Heart right ventricle (tissue), 16 donors: ENCODE measurements at regions of chr9 and their contacts with region 1.

Region 1: DNA sequence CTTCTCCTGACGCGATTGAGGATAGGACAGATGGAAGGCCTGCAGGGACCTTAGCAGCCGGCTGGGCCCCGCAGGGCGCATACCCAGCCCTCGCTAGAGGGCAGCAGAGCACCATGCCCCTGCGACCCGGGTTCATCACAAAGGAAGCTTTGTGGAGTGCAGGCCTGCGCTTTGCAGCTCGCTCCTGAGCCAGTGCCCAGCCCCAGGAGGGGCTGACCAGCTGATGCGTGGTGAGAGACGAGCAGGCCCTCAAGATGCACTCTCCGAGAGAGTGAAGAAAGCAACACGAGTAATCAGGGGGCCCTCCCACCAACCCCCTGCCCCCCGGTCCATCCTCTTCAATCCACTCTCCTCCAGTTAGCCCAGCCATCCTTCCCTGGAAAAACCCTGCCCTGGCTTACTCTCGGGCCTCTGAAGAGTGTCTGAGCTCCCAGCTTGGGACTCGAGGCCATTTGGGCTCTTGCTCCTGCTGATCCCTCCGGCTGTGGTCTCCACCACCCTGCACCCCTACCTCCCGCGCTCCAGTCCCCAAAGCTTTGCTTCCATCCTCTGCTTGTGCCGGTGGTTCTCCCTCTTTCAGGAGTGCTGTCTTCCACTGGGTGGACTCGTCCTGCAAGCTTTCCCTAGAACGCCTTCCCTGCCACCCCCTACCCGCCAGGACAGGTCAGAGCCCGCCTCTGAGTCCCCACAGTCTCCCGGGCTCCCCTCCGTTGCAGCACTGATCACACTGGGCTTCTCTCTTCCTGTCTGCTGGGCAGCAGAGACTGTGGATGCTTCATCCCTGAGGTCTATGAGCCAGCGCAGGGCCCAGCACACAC is 9.1 kb upstream of the KIF12 start:
- DNase-seq: peak; percentile 70 to 84
- ATAC-seq: peak; percentile 94 to 97 (median 96)
- H3K4me3 ChIP-seq: no peak overlapping the region
- H3K27ac ChIP-seq: no peak overlapping the region
- H3K4me1 ChIP-seq: peaks cover 3 to 20% (median 9%) of the 10 kb centered on the region in 9 donors
- H3K27me3 ChIP-seq: peaks cover 0 to 10% (median 0%) of the 10 kb centered on the region in 7 donors
- CTCF ChIP-seq: peak; percentile 79 to 96 (median 93)

Region 2: DNA sequence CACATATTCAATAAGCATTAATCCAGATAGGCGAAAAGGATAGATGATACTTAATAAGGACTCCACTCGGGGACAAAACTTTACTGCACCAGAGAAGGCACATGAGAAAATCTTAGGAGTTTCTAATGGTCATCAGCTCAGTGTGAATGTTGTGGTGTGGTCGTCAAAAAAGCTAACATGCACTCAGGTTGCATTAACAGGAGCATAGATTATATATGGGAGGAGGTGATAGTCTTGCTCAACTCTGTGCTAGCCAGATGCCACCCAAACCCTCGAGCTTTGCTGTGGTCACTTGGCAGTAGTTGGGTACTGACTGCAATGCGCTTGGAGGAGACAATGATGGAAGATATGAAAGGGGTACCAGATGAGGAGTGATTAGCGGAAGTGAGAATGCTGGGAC is 38.5 kb after region 1 on chr9:
- intact Hi-C with region 1: loop called in 6 of 10 experiments (anchors 2 to 5 kb)
- DNase-seq: no peak
- ATAC-seq: no peak
- H3K4me3 ChIP-seq: no peak overlapping the region
- H3K27ac ChIP-seq: no peak overlapping the region
- H3K4me1 ChIP-seq: peaks cover 2 to 13% (median 8%) of the 10 kb centered on the region in 9 donors
- H3K27me3 ChIP-seq: peaks cover 0 to 18% (median under 1%) of the 10 kb centered on the region in 7 donors
- CTCF ChIP-seq: no peak

Region 3: DNA sequence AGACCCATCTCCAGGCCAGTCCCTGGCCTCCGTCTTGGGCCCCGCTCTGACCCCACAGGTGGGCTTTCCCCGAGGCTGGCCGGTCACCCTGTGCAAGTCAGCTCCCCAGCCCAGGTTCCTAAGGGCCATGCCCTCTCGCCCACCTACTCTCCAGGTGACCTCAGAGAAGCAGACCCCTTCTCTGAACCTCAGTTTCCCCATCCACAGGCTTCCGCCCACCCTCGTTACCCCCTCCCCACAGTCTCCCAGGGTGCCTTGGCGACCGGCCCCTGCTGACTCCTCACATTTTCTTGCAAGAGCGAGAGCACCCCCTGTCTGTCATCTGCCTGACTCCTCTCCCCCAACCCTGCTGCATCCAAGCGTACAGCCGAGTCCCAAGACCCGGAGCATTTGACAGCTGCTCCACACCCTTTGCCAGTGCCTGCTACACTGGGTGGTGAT is 163.4 kb after region 1 on chr9:
- intact Hi-C with region 1: loop called in 7 of 10 experiments (anchors 1 to 10 kb)
- DNase-seq: peak; percentile 41 to 55
- ATAC-seq: peak; percentile 46 to 82 (median 72)
- H3K4me3 ChIP-seq: no peak overlapping the region
- H3K27ac ChIP-seq: no peak overlapping the region
- H3K4me1 ChIP-seq: no peaks in the 10 kb centered on the region
- H3K27me3 ChIP-seq: no peaks in the 10 kb centered on the region
- CTCF ChIP-seq: peak in 8 of 9 donors; percentile 17 to 59 (median 50)

Region 4: GRCh38 chr9:114276908-114277821 is 168.9 kb after region 1 on chr9:
- intact Hi-C with region 1: loop called in 6 of 10 experiments (anchors 5 to 10 kb)
- DNase-seq: no peak
- ATAC-seq: no peak
- H3K4me3 ChIP-seq: no peak overlapping the region
- H3K27ac ChIP-seq: no peak overlapping the region
- H3K4me1 ChIP-seq: peaks cover 0 to 16% (median 5%) of the 10 kb centered on the region in 9 donors
- H3K27me3 ChIP-seq: no peaks in the 10 kb centered on the region
- CTCF ChIP-seq: no peak

Region 5: DNA sequence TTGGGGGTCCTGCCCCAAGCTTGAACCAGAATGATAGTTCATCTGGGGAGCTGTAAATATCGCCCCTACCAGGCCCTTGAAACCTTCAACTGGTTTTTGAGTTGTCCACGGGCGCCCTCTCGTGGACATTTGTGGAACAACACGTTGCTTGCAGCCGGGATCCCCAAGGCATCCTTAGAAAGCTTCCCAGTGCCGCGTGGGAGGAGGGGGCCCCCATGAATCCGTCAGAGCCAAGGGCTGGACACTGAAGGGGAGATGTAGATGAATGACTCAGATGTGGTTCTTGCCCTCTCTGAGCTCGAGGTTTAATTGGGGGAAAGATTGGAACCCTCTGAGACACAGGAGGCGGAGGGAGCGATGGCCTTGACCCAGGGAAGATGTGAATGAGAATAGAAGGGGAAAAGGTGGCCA is 182.8 kb after region 1 on chr9:
- intact Hi-C with region 1: loop called in 9 of 10 experiments (anchors 1 to 5 kb)
- DNase-seq: peak; percentile 62 to 76
- ATAC-seq: peak; percentile 12 to 67 (median 48)
- H3K4me3 ChIP-seq: no peak overlapping the region
- H3K27ac ChIP-seq: no peak overlapping the region
- H3K4me1 ChIP-seq: no peaks in the 10 kb centered on the region
- H3K27me3 ChIP-seq: no peaks in the 10 kb centered on the region
- CTCF ChIP-seq: peak; percentile 87 to 96 (median 95)

Region 6: DNA sequence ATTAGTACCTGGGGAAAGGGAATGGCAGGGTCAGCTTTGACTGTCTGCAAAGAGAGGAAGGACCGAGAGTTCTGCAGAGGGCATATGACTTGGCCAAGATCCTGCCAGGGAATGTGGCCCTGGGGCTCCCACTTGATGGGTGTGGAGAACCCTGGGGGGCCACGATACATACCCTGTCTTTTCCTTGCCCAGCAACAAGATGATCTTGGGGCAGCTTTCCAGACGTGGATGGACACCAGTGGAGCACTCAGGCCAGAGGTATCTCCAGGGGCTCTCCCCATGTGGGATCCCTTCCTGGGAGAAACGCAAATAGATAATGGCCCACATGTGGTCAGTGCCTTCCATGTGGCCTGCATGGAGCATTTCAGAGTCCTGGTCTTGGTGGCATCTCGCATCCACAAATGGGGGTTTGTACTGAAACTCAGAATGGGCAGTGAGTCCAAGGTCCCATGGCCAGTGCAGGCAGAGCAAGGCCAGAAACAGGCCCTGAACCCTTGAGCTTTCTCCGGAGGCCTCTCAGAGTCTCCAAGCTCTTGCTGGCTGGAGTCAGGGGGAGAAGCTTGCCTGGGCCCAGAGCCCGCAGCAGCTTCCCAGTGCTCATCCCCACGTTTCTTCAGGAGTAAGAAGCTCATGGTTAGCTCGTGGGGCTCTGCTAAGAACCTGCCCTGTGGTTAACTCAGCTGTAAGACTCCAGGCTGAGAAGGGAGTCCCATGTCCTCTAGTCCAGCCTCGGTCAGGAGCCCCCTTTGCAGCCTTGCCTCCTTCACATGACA is 196.4 kb after region 1 on chr9:
- intact Hi-C with region 1: loop called in 1 of 10 experiments (anchors 5 kb)
- DNase-seq: no peak
- ATAC-seq: no peak
- H3K4me3 ChIP-seq: no peak overlapping the region
- H3K27ac ChIP-seq: no peak overlapping the region
- H3K4me1 ChIP-seq: peaks cover 0 to 10% (median 5%) of the 10 kb centered on the region in 9 donors
- H3K27me3 ChIP-seq: no peaks in the 10 kb centered on the region
- CTCF ChIP-seq: no peak